Mammary epithelial cell (primary cell): ENCODE measurements at regions of chr11 and their contacts with region 1.

Region 1: DNA sequence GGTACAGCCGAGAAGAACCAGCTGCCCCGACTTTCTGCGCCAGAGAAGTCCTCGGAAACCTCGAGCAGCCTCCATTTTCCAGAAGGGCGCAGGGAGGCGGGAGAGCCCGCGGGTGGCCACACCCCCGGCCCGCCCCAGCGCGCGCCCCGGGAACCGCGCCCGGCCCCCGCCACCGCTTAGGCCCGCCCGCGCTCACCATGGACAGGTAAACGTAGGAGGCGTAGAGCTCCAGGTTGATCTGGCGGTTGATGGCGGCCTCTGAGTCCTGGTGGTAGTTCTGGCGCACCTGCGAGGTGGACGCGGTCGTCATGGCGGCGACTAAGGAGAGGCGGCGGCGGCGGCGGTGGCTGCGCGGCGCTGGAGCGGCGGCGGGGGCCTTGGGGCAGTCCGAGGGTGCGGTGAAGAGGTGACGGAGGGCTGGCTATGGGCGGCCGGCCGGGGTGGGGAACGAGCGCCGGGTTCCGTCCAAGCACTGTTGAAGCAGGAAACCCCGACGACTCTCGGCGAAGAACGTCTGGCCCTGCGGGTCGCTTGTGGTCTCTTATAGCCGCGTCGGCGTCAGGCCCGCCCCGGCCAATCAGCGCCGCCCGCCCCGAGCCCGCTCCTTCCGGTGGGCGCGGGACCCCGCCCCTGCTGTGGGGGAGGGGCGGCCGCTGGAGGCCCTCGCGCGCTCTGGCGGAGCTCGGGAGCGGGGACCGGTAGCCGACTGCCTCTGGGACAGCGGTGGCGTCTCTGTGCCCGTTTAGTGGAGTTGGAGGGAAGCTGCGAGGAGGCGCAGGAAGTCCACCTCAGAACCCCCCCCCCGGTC is at the start of gene FTH1:
- DNase-seq: peak; percentile 90
- H3K4me3 ChIP-seq: peak within 1 kb of the TSS; percentile 64 to 98 (median 92)
- H3K27ac ChIP-seq: peak within 1 kb of the TSS; percentile 94
- H3K4me1 ChIP-seq: peaks cover 46% of the 10 kb centered on the region
- H3K27me3 ChIP-seq: no peaks in the 10 kb centered on the region
- CTCF ChIP-seq: no peak
- total RNA-seq, gene FTH1: 2,122 to 4,396 TPM

Region 2: GRCh38 chr11:61816736-61817455 is 150.4 kb before region 1 on chr11 and contains the start of gene FADS1:
- CTCF ChIA-PET with region 1: no interaction called
- dilution Hi-C with region 1: loop called (anchors 5 kb)
- in situ Hi-C with region 1: no loop called
- intact Hi-C with region 1: loop called (anchors 5 kb)
- DNase-seq: peak; percentile 73
- H3K4me3 ChIP-seq: peak within 1 kb of the TSS; percentile 52 to 66 (median 64)
- H3K27ac ChIP-seq: peak within 1 kb of the TSS; percentile 68
- H3K4me1 ChIP-seq: peaks cover 50% of the 10 kb centered on the region
- H3K27me3 ChIP-seq: no peaks in the 10 kb centered on the region
- CTCF ChIP-seq: peak; percentile 20 to 60
- total RNA-seq, gene FADS1: 32.9 to 38.8 TPM

Region 3: DNA sequence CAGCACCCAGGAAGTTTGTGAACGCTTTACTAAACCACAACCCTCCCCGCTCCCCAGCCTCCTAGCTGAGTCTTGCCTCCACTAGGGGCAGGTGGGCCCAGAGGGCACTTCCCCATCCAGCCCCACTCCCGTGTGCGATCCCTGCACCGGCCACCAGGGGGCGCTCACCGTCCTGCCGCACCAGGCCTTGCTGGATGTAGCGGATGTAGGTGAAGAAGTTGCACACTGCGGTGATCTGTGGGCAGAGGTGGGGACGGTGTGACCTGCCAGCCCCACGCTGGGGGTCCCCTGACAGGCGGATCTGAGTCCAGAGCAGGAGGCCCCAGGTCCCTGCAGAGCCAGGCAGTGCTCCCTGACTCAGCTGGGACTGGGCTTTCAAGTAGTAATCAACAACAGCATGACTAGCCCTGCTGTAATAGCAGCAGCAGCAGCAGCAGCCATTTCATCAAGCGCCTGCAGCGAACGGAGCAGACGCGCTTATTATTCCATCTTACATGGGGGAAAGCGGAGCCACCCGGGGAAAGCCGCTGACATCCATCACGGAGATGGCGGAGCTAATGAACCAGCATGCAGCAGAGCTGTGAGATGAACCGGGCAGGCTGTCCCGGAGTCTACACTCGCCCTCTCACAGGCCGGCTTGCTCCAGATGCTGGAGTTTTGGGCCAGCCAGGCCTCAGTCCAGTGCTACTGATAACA is 68.0 kb before region 1 on chr11:
- CTCF ChIA-PET with region 1: no interaction called
- dilution Hi-C with region 1: no loop called
- in situ Hi-C with region 1: no loop called
- intact Hi-C with region 1: loop called (anchors 5 kb)
- DNase-seq: peak; percentile 52
- H3K4me3 ChIP-seq: no peak overlapping the region
- H3K27ac ChIP-seq: no peak overlapping the region
- H3K4me1 ChIP-seq: peaks cover 19% of the 10 kb centered on the region
- H3K27me3 ChIP-seq: no peaks in the 10 kb centered on the region
- CTCF ChIP-seq: peak; percentile 96 to 99

Region 4: DNA sequence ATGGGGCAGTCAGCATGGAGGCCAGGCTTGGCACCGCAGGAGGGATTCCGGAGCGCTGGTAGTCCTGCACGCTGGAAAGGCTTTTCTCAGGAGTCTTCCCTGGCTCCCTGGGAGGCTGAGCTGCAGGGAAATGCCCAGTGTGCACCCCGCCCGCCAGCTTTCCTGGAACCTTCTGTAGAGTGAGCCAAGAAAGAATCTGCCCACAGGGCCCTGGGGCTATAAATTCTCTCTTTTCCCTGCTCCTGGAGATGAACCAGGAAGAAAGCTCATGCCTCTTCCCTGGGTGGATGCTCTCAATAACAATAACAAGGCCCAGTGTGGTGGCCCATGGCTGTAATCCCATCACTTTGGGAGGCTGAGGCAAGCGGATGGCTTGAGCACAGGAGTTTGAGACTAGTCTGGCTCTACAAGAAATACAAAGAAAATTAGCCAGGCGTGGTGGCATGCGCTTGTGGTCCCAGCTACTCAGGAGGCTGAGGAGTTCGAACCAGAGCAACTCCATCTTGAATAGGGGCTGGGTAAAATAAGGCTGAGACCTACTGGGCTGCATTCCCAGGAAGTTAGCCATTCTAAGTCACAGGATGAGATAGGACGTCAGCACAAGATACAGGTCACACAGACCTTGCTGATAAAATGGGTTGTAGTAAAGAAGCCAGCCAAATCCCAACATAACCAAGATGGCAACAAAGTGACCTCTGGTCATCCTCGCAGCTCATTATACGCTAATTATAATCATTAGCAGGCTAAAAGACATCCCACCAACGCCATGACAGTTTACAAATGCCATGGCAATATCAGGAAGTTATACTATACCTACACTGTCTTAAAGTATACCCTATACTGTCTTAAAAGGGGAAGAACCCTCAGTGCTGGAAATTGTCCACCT is 46.5 kb after region 1 on chr11:
- CTCF ChIA-PET with region 1: no interaction called
- dilution Hi-C with region 1: no loop called
- in situ Hi-C with region 1: no loop called
- intact Hi-C with region 1: loop called (anchors 5 kb)
- DNase-seq: peak; percentile 65
- H3K4me3 ChIP-seq: peak overlapping the region in 1 of 3 experiments; percentile 21
- H3K27ac ChIP-seq: no peak overlapping the region
- H3K4me1 ChIP-seq: peaks cover 21% of the 10 kb centered on the region
- H3K27me3 ChIP-seq: no peaks in the 10 kb centered on the region
- CTCF ChIP-seq: no peak

Region 5: DNA sequence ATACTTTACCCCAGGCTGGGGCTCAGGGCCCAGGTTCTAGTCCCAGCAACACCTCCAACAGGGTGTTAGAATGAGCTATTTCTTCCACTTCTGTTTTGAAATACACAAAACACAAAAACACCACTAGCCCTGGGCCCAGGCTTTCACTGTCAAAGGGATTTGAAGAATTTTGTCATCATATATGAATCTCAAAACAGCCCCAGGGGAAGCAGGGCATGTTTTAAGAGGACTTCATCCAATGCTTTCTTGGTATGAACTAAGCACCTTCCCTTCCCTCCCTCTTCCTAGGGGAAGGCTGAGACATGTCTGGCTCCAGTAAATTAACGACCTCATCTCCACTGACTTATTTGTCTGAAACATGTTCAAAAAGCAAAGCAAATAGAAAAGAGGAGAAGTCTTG is 80.7 kb after region 1 on chr11:
- CTCF ChIA-PET with region 1: interaction called, 3 read pairs
- dilution Hi-C with region 1: no loop called
- in situ Hi-C with region 1: loop called (anchors 5 kb)
- intact Hi-C with region 1: no loop called
- DNase-seq: peak; percentile 62
- H3K4me3 ChIP-seq: no peak overlapping the region
- H3K27ac ChIP-seq: no peak overlapping the region
- H3K4me1 ChIP-seq: peaks cover 41% of the 10 kb centered on the region
- H3K27me3 ChIP-seq: no peaks in the 10 kb centered on the region
- CTCF ChIP-seq: no peak

Region 6: GRCh38 chr11:62061351-62062222 is 94.3 kb after region 1 on chr11:
- CTCF ChIA-PET with region 1: no interaction called
- dilution Hi-C with region 1: loop called (anchors 5 kb)
- in situ Hi-C with region 1: no loop called
- intact Hi-C with region 1: no loop called
- DNase-seq: peak; percentile 29
- H3K4me3 ChIP-seq: no peak overlapping the region
- H3K27ac ChIP-seq: no peak overlapping the region
- H3K4me1 ChIP-seq: no peaks in the 10 kb centered on the region
- H3K27me3 ChIP-seq: no peaks in the 10 kb centered on the region
- CTCF ChIP-seq: peak; percentile 36 to 51